ENCODE measurements at regions of chr13 and their contacts with region 1.

Region 1: DNA sequence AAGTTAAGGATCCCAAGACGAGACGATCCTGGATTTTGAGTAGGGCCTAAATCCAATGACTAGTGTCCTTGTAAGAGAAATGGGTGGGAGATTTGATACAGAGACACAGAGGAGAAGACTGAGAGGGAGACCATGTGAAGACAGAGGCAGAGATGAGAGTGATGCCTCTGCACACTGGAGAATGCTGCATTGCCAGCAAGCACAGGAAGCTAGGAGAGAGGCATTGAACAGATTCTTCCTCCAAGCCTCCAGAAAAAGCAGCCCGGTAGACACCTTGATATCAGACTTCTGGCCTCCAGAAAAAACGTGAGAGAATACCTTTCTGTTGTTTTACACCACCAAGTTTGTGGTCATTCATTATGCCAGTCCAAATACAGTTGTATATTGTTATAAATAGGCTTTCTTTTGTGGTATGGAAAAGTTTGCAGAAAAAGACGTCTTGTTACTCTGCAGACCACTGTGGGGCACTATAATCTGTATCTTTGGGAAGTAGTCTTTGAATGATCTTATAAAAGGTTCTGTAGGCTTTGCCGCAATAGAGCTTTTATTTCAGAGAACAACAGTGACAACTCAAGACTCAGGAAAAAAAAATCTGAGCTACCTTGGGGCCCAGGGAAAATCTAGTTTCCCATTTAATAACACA is 17.9 kb upstream of the RFC3 start:
- DNase-seq: no peak
- ATAC-seq: no peak

Region 2: GRCh38 chr13:33832872-33833271 is 32.8 kb after region 1 on chr13:
- intact Hi-C with region 1: loop called (anchors 1 kb)
- DNase-seq: no peak
- ATAC-seq: no peak

Region 3: GRCh38 chr13:34076943-34077703 is 277.1 kb after region 1 on chr13:
- intact Hi-C with region 1: loop called (anchors 5 kb)
- DNase-seq: no peak
- ATAC-seq: no peak

Region 4: DNA sequence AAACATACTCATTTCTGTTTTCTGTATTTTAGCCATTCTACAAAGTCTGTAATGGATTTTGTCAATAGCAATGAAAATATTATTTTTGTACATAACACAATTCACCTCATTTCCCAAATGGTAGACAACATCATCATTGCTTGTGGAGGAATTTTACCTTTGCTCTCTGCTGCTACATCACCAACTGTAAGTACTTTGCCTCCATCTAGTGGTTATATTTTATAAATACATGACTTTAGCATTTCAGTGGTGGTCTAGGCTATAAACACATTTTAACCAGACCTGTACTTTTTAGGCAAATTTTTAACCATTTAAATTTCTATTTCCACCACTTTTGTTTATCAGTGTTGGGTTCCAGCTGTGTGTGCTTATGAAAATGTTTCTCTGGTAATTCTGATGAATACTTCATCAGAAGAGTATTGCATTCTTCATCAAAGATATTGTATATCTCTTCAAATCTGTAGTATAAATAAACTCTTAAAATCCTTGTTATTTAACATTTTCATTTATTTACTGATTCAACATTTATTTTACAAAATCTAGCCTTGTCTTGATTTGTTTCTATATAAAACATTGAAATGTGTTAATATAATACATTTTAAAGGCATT is 1364.4 kb after region 1 on chr13:
- intact Hi-C with region 1: loop called (anchors 10 kb)
- DNase-seq: no peak
- ATAC-seq: peak; percentile 63

Measured in Right ventricle myocardium inferior (tissue), 1 donor.